ENCODE measurements at regions of chr19 and their contacts with region 1.

Region 1: GRCh38 chr19:42214810-42215485 is 2.5 kb downstream of the DEDD2 start:
- DNase-seq: no peak
- H3K4me3 ChIP-seq: peak overlapping the region in 1 of 3 experiments; percentile 96
- H3K4me3 Mint-ChIP-seq: peak overlapping the region; percentile 89 to 96
- H3K27ac ChIP-seq: peak overlapping the region in 1 of 2 donors; percentile 98
- H3K27ac Mint-ChIP-seq: peak overlapping the region in 4 of 7 donors; percentile 20 to 79 (median 68)
- H3K4me1 ChIP-seq: peaks cover 61 to 68% of the 10 kb centered on the region in 2 donors
- H3K4me1 Mint-ChIP-seq: peaks cover 60% of the 10 kb centered on the region
- H3K27me3 ChIP-seq: no peaks in the 10 kb centered on the region
- H3K27me3 Mint-ChIP-seq: peaks cover 0 to 1% (median 0%) of the 10 kb centered on the region in 3 donors
- CTCF ChIP-seq: no peak

Region 2: DNA sequence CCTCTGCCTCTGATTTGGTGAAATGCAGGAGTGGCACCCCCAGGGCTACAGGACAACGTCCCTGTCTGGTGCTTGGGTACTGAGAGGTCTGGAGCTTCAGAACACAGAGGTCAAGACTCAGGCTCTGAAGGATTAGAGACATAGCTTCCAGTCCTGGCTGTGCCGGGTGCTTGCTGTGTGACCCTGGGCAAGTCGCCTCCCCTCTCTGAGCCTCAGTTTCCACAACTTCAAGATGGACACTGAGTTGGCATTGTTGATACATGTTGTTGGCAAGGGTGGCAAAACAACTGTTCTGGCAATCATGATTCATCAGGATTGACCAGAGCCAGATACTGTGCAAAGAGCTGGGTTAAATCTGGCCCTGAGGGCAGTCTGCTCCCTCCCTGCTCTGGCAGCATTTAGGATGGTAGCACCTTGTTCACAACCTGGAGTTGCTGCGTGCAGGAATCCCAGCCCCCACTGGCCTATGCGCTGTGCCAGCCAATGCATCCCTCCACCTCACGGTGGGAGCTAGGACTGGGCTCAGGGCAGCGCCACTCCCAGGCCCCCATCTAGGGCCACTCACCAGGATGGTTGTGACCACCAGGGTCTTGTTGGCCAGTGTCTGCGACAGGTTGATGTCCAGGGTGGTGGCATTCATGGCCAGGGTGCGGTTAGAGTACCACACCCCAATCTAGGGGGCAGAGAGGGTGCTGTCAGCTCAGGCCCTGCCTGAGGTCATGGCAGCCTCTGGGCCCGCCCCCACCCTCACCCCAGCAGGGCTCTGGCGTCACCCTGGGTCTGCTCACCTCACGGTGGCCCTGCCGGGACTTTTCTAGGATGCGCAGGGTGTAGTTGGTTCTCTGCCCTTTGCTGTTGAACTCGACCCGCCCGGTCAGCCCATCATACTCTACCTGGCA is 161.7 kb before region 1 on chr19:
- intact Hi-C with region 1: no loop called
- DNase-seq: no peak
- H3K4me3 ChIP-seq: no peak overlapping the region
- H3K4me3 Mint-ChIP-seq: no peak overlapping the region
- H3K27ac ChIP-seq: no peak overlapping the region
- H3K27ac Mint-ChIP-seq: no peak overlapping the region
- H3K4me1 ChIP-seq: no peaks in the 10 kb centered on the region
- H3K4me1 Mint-ChIP-seq: peaks cover 8% of the 10 kb centered on the region
- H3K27me3 ChIP-seq: no peaks in the 10 kb centered on the region
- H3K27me3 Mint-ChIP-seq: peaks cover 0 to 3% (median 2%) of the 10 kb centered on the region in 3 donors
- CTCF ChIP-seq: no peak

Region 3: GRCh38 chr19:42199440-42200115 is 15.4 kb before region 1 on chr19:
- intact Hi-C with region 1: loop called (anchors 1 to 2 kb)
- DNase-seq: peak; percentile 82 to 87 (median 86)
- H3K4me3 ChIP-seq: peak overlapping the region; percentile 28 to 79 (median 54)
- H3K4me3 Mint-ChIP-seq: peak overlapping the region; percentile 79 to 86
- H3K27ac ChIP-seq: peak overlapping the region; percentile 100
- H3K27ac Mint-ChIP-seq: peak overlapping the region; percentile 100
- H3K4me1 ChIP-seq: peaks cover 90% of the 10 kb centered on the region in 2 donors
- H3K4me1 Mint-ChIP-seq: peaks cover 87% of the 10 kb centered on the region
- H3K27me3 ChIP-seq: no peaks in the 10 kb centered on the region
- H3K27me3 Mint-ChIP-seq: peaks cover 0 to 5% (median 0%) of the 10 kb centered on the region in 3 donors
- CTCF ChIP-seq: peak; percentile 74